Cardiac septum (tissue), 1 donor: ENCODE measurements at regions of chr11 and their contacts with region 1.

Region 1: DNA sequence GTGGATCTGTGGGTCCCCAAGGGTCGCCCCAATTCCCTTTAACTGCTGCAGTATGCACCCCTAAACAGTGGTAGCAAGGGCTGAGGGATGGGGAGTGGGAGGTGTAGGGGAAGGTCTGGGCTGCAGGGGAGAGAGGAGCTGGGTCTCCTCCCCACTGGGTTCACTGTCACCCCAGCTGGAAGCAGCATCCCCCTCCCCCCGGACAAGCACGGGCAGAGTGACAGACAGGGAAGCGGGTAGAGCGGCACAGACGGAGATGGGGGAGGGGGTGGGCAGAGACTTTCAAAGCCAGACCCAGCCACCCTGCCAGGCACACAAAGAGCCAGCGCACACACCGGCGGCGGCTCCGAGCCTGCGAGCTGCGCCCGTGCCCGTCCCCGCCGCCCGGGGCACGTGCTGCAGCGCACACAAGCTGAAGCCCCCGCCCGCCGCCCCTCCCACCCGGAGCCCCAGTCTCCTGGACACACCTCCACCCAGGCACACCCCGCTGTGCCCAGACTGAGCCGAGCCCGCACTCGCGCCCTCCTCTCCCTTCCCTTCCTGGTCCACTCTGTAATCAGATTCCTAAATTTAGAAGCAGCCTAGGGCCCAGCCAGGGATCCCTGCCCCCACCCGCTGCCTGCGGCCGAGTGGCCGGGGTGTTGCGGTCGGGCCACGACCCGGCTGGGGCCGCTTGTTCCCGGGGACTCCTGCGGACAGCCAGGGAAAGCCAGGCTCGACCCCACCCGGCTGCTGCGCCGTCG is 899 bp upstream of the RCOR2 start:
- DNase-seq: peak; percentile 92

Region 2: DNA sequence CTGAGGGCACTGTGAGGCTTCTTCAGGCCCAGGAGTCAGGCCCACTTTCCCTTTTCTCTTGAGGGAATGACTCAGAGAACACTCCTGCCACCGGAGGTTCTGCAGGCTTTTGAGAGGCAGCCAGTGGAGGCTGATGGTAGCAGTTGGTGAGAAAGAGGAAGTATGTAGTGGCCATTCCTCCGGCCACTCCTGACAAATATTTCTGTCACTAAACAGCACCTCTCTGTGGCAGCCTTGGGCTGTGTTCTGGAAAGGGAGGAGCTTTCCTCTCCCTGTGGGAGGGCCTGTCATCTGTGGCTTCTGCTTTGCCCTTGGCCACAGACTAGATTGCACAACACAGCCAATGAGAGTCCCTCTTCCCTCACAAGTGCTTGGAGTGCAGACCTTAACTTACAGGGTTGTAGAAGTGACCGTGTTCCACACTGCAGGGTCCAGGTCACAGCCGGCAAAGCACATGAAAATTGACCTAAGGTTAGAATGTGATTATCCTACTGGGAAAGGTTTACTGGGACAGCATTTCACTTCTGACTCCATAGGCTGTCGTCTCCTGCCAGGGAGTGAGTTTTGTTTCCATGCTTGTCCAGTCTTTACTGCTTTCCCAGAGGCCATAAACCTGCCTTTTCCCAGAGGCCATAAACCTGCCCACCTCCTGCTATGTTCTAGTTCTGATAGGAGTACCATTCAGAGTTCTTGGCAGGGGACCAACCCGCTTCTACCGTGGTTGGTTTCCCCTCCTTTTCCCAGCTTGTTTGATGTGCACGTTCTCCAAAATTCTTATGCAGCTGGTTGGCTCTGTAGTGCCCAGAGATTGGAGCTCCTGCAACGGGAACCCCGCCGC is 45.7 kb before region 1 on chr11:
- intact Hi-C with region 1: loop called (anchors 2 kb)
- DNase-seq: peak; percentile 93

Region 3: GRCh38 chr11:63938479-63939396 is 20.9 kb after region 1 on chr11 and contains the start of gene NAA40:
- intact Hi-C with region 1: loop called (anchors 2 kb)
- DNase-seq: peak; percentile 92
- total RNA-seq, gene NAA40: 19.2 TPM